ENCODE measurements at regions of chr17 and their contacts with region 1.

Region 1: GRCh38 chr17:1648963-1649843 is 463 bp downstream of the RILP start:
- DNase-seq: peak; percentile 96
- ATAC-seq: peak; percentile 72
- H3K4me3 ChIP-seq: peak overlapping the region in 4 of 5 experiments; percentile 35 to 75 (median 60)
- H3K4me3 Mint-ChIP-seq: peak overlapping the region; percentile 79
- H3K27ac ChIP-seq: peak overlapping the region in 1 of 2 donors; percentile 28
- H3K27ac Mint-ChIP-seq: peak overlapping the region; percentile 75
- H3K4me1 ChIP-seq: peaks cover 26 to 36% of the 10 kb centered on the region in 2 donors
- H3K4me1 Mint-ChIP-seq: peaks cover 30% of the 10 kb centered on the region
- H3K27me3 ChIP-seq: no peaks in the 10 kb centered on the region
- H3K27me3 Mint-ChIP-seq: no peaks in the 10 kb centered on the region
- CTCF ChIP-seq: peak; percentile 79

Region 2: GRCh38 chr17:896953-897661 is 752.1 kb before region 1 on chr17:
- CTCF ChIA-PET with region 1: no interaction called
- POLR2A ChIA-PET with region 1: no interaction called
- intact Hi-C with region 1: no loop called
- DNase-seq: no peak
- ATAC-seq: no peak
- H3K4me3 ChIP-seq: no peak overlapping the region
- H3K4me3 Mint-ChIP-seq: no peak overlapping the region
- H3K27ac ChIP-seq: no peak overlapping the region
- H3K27ac Mint-ChIP-seq: no peak overlapping the region
- H3K4me1 ChIP-seq: no peaks in the 10 kb centered on the region
- H3K4me1 Mint-ChIP-seq: no peaks in the 10 kb centered on the region
- H3K27me3 ChIP-seq: peaks cover 0 to 5% (median 1%) of the 10 kb centered on the region in 4 experiments
- H3K27me3 Mint-ChIP-seq: peaks cover 36% of the 10 kb centered on the region
- CTCF ChIP-seq: no peak

Region 3: DNA sequence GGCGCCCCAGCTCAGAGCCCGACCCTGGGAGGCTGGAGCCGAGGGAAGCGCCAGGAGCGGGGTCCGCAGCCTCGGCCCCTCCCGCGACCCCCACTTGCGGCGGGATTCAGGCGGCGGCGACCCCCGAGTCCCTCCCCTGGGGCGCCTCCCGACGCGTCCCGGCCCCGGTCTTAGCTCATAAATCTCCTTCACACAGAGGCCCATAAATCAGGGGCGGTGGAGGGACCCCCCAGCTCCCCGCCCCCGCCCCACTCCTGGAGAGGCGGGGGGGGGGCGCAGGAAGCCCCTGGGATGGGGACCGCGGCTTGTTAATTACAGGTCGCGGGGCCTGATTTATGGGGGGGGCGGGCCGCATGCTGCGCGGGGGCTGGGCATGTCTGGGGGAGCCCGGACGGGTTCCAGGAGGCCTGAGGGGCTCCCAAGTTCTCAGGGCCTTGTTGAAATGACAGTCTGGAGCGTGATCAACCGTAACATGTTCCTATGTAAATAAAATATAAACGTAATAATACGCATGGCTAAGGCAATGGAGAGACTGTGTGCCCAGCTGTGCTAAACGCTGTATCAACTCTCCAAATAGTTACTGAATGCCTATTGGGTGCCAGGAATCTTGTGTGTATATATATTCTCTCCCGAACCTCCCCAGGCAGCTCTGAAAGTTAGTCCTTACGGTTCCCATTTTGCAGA is 389.0 kb before region 1 on chr17:
- CTCF ChIA-PET with region 1: no interaction called
- POLR2A ChIA-PET with region 1: no interaction called
- intact Hi-C with region 1: loop called (anchors 5 kb)
- DNase-seq: no peak
- ATAC-seq: no peak
- H3K4me3 ChIP-seq: peak overlapping the region in 4 of 5 experiments; percentile 32 to 67 (median 47)
- H3K4me3 Mint-ChIP-seq: peak overlapping the region; percentile 63
- H3K27ac ChIP-seq: no peak overlapping the region
- H3K27ac Mint-ChIP-seq: no peak overlapping the region
- H3K4me1 ChIP-seq: peaks cover 3 to 13% of the 10 kb centered on the region in 2 donors
- H3K4me1 Mint-ChIP-seq: peaks cover 12% of the 10 kb centered on the region
- H3K27me3 ChIP-seq: peaks cover 0 to 45% (median 16%) of the 10 kb centered on the region in 4 experiments
- H3K27me3 Mint-ChIP-seq: peaks cover 26% of the 10 kb centered on the region
- CTCF ChIP-seq: no peak

Region 4: DNA sequence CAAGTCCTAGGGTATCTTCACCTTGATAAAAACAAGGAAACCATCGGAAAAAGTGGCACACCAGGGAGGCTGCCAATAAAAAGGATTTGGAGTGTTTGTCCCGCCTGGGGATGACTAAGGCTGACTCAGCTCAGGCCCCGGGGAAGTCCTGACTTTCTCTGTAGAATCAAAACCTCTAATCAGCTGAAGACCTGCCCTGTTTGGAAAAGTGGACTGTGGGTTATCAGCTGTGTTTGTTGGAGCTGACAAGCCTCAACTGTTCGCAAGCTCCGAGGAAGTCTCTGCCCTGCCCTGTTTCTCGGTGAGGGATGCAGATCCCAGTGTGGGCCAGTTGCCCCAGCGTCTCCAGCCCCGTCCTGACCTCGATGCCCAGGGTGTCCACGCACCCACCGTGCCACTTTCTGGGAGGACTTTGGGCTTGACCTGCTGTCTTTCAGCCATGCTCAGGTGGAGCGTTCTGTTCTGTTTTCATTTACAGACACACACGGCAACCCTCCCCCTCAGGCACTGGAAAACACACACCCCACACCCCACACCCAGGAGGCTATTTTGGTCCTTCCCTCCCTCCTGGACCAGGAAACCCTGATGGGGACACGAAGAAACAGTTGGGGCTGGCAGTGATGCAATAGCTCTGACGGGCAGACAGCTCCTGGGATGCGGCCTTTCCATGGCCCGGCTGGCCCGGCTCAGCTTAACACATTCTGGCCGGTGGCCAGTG is 59.0 kb before region 1 on chr17:
- CTCF ChIA-PET with region 1: interaction called, 4 read pairs
- POLR2A ChIA-PET with region 1: interaction called, 6 read pairs
- intact Hi-C with region 1: loop called (anchors 1 kb)
- DNase-seq: no peak
- ATAC-seq: no peak
- H3K4me3 ChIP-seq: no peak overlapping the region
- H3K4me3 Mint-ChIP-seq: no peak overlapping the region
- H3K27ac ChIP-seq: no peak overlapping the region
- H3K27ac Mint-ChIP-seq: peak overlapping the region; percentile 74
- H3K4me1 ChIP-seq: peaks cover 24 to 35% of the 10 kb centered on the region in 2 donors
- H3K4me1 Mint-ChIP-seq: peaks cover 27% of the 10 kb centered on the region
- H3K27me3 ChIP-seq: no peaks in the 10 kb centered on the region
- H3K27me3 Mint-ChIP-seq: no peaks in the 10 kb centered on the region
- CTCF ChIP-seq: no peak

Region 5: GRCh38 chr17:1673041-1673785 is 24.0 kb after region 1 on chr17:
- CTCF ChIA-PET with region 1: interaction called, 34 read pairs
- POLR2A ChIA-PET with region 1: no interaction called
- intact Hi-C with region 1: no loop called
- DNase-seq: no peak
- ATAC-seq: no peak
- H3K4me3 ChIP-seq: no peak overlapping the region
- H3K4me3 Mint-ChIP-seq: no peak overlapping the region
- H3K27ac ChIP-seq: no peak overlapping the region
- H3K27ac Mint-ChIP-seq: no peak overlapping the region
- H3K4me1 ChIP-seq: no peaks in the 10 kb centered on the region
- H3K4me1 Mint-ChIP-seq: peaks cover 7% of the 10 kb centered on the region
- H3K27me3 ChIP-seq: no peaks in the 10 kb centered on the region
- H3K27me3 Mint-ChIP-seq: no peaks in the 10 kb centered on the region
- CTCF ChIP-seq: no peak

Region 6: DNA sequence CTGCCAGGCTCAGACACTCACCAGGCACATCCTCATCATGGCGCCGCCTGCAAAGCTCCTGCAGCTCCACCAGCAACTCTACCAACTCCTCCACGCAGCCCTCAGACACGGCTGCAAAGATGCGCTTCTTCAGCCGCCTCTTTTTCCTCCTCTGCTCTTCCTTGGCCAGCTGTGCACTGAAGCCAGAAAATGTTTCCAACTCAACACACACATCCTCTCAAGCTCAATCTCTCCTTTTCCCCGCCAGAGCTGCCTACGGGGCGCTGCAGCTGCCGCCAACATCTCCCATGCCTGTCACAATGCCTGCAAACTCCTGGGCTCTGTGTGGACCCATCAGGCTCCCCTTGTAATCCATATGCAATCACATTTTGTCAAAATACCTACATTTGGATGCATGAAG is 1894.2 kb after region 1 on chr17:
- CTCF ChIA-PET with region 1: no interaction called
- POLR2A ChIA-PET with region 1: no interaction called
- intact Hi-C with region 1: no loop called
- DNase-seq: no peak
- ATAC-seq: no peak
- H3K4me3 ChIP-seq: no peak overlapping the region
- H3K4me3 Mint-ChIP-seq: no peak overlapping the region
- H3K27ac ChIP-seq: no peak overlapping the region
- H3K27ac Mint-ChIP-seq: no peak overlapping the region
- H3K4me1 ChIP-seq: no peaks in the 10 kb centered on the region
- H3K4me1 Mint-ChIP-seq: no peaks in the 10 kb centered on the region
- H3K27me3 ChIP-seq: no peaks in the 10 kb centered on the region
- H3K27me3 Mint-ChIP-seq: no peaks in the 10 kb centered on the region
- CTCF ChIP-seq: no peak